HCT116 (cell line): ENCODE measurements at regions of chr9 and their contacts with region 1.

Region 1: DNA sequence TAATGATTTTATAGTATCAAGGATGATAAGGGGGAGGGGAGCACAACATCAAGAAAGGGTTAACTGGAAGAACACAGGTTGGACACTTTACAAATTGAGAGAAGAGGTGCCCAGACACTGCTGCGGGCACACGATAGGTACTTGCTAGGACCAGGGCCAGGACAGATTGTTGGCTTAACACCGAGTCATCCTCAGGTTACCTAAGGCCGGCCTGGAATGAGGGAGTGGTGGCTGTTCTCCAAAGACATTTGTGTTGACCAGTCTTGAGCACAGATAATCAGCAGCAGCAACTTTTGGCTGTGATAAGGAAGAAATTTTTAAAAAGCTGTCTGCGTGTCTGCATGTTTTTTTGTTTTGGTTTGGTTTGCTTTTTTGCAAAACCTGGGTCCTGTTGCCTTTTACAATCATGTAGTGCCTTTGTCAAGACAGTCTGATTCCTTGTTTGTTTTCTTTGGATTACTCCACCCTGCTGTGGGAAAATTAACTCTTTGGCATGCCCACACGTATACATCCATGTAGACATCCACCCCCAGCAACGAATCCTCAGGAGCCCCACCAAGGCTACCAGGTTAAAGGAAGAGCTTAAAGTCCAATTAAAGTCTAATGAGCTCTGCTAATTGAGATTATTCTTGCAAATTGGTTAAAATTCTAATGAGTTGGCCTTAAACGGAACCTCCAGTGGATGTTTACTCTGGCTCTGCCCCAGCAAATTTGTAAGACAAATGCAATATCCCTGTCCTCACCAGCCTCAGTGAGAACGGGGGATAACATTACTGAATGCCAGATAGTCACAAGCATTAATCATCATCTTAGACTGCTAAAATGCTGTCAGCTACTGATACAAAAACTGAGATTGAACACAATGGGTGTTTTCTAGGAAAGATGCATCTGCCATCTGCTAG is 382.3 kb downstream of the ACTL7B start:
- DNase-seq: no peak
- ATAC-seq: 0 out of 2 replicates have a peak, but pooled peaks have one; percentile 31
- H3K4me3 ChIP-seq: no peak overlapping the region
- H3K27ac ChIP-seq: no peak overlapping the region
- H3K4me1 ChIP-seq: peaks cover 7 to 46% of the 10 kb centered on the region in 2 experiments; a peak in 3 of 4 replicates
- H3K27me3 ChIP-seq: no peaks in the 10 kb centered on the region; the same call in 1 of the 2 replicates
- CTCF ChIP-seq: no peak
- POLR2A ChIP-seq: no peak
- RAD21 ChIP-seq: no peak

Region 2: GRCh38 chr9:108551030-108551838 is 77.8 kb after region 1 on chr9:
- CTCF ChIA-PET with region 1: no interaction called
- POLR2A ChIA-PET with region 1: no interaction called
- RAD21 ChIA-PET with region 1: no interaction called
- intact Hi-C with region 1: loop called (anchors 5 kb)
- DNase-seq: peak; percentile 62
- ATAC-seq: peak; percentile 78
- H3K4me3 ChIP-seq: peak overlapping the region; percentile 10 to 49
- H3K27ac ChIP-seq: peak overlapping the region; percentile 15; the same call in 1 of the 2 replicates
- H3K4me1 ChIP-seq: peaks cover 26 to 53% of the 10 kb centered on the region in 2 experiments
- H3K27me3 ChIP-seq: no peaks in the 10 kb centered on the region
- CTCF ChIP-seq: no peak
- POLR2A ChIP-seq: no peak
- RAD21 ChIP-seq: peak; percentile 38

Region 3: DNA sequence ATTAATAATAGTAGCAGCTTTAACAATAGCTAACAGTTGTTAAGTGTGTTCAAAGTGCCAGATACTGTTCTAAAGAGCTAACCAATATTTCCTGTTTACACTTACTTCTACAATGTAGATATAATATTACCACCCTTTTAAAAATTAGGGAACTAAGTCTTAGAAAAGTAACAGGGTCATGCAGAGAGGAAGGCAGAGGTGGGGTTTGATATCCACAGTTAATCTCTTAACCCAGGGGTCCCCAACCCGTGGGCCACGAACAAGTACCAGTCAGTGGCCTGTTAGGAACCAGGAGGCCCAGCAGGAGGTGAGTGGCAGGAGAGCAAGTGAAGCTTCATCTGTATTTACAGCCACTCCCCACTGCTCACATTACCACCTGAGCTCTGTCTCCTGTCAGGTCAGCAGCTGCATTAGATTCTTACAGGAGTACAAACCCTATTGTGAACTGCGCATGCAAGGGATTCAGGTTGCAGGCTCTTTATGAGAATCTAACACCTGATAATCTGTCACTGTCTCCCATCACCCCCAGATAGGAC is 293.2 kb after region 1 on chr9:
- CTCF ChIA-PET with region 1: no interaction called
- POLR2A ChIA-PET with region 1: no interaction called
- RAD21 ChIA-PET with region 1: no interaction called
- intact Hi-C with region 1: no loop called
- DNase-seq: no peak
- ATAC-seq: no peak
- H3K4me3 ChIP-seq: no peak overlapping the region
- H3K27ac ChIP-seq: no peak overlapping the region
- H3K4me1 ChIP-seq: no peaks in the 10 kb centered on the region
- H3K27me3 ChIP-seq: no peaks in the 10 kb centered on the region
- CTCF ChIP-seq: no peak
- POLR2A ChIP-seq: no peak
- RAD21 ChIP-seq: no peak